AG04450 (cell line): ENCODE measurements at regions of chr14 and their contacts with region 1.

Region 1: DNA sequence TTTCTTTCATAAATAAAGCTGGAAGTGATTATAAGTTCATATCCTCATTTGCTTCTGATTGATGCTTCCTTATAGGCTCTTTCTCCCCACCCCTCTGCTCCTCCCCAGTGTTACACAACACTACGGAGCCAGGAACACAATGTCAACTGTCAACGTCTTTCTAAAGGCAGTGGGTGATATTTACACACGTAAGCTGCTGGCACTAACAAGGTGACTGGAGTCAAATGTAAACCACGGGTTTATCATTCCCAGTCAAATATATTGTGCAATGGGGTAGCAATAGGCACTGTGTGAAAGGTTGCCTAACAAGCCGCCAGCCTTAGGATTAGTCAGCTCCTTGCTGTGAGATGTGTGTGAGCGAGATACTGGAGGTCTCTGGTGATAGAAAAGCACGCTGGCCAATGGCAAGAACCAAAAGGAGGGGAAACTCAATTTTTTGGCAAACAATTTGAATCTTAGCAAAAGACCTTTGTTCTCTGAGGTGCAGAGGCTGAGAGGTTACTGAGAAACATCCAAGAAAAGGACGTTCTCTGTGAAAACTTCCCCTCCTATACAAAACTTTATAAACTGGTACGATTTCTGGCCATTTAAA is 22.1 kb upstream of the HECTD1 start:
- DNase-seq: peak; percentile 88
- H3K4me3 ChIP-seq: peak overlapping the region; percentile 24
- H3K27ac ChIP-seq: peak overlapping the region; percentile 57
- H3K27me3 ChIP-seq: no peaks in the 10 kb centered on the region
- CTCF ChIP-seq: no peak

Region 2: GRCh38 chr14:31263485-31264133 is 33.9 kb after region 1 on chr14:
- CTCF ChIA-PET with region 1: interaction called, 3 read pairs
- POLR2A ChIA-PET with region 1: interaction called, 17 read pairs
- DNase-seq: peak; percentile 99
- H3K4me3 ChIP-seq: no peak overlapping the region
- H3K27ac ChIP-seq: peak overlapping the region; percentile 94
- H3K27me3 ChIP-seq: no peaks in the 10 kb centered on the region
- CTCF ChIP-seq: no peak